ENCODE measurements at regions of chr22 and their contacts with region 1.

Region 1: DNA sequence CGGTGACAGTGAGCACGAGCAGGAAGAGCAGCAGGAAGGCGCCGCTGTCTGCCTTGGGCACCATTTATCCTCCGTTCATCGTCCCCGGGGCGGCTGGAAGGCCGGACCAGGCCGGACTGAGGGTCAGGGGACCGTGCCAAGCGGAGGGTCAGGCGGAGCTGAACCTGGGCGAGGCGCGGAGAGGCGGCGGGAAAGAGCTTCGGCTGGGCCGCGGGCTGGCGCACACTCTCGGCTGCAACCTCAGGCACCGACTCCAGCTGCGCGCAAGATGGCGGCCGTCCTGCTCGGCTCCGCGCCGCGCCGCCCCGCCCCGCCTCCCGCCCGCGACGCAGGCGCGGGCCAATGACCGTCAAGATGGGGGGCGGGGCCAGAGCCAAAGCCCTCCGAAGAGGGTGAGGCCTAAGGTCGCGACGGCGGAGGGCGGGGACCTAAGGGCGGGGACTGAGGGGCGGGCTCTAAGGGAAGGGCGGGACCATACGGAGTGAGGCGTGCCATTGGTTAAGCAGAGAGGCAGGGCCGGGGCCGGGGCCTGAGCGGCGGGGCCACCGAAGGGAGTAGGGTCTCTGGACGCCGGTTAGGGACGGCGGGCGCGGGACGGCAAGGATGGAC is at the start of gene DGCR2:
- DNase-seq: peak; percentile 97
- H3K4me3 Mint-ChIP-seq: peak within 1 kb of the TSS; percentile 79
- H3K27ac Mint-ChIP-seq: peak within 1 kb of the TSS; percentile 62
- H3K4me1 Mint-ChIP-seq: peaks cover 41% of the 10 kb centered on the region
- H3K27me3 Mint-ChIP-seq: no peaks in the 10 kb centered on the region
- total RNA-seq, gene DGCR2: 29.7 to 30.8 TPM

Region 2: GRCh38 chr22:19109198-19110067 is 12.8 kb before region 1 on chr22:
- CTCF ChIA-PET with region 1: interaction called, 10 read pairs
- POLR2A ChIA-PET with region 1: interaction called, 41 read pairs
- DNase-seq: peak; percentile 66
- H3K4me3 Mint-ChIP-seq: peak overlapping the region; percentile 50
- H3K27ac Mint-ChIP-seq: peak overlapping the region; percentile 81
- H3K4me1 Mint-ChIP-seq: peaks cover 50% of the 10 kb centered on the region
- H3K27me3 Mint-ChIP-seq: no peaks in the 10 kb centered on the region

Measured in activated CD4-positive, alpha-beta memory T cell treated with anti-CD3 and anti-CD28 coated beads, Interleukin-2, amount 10 ng/mL, durations not matched to agents 7 days and 5 days (primary cell).